ENCODE measurements at regions of chr1 and their contacts with region 1.

Region 1: DNA sequence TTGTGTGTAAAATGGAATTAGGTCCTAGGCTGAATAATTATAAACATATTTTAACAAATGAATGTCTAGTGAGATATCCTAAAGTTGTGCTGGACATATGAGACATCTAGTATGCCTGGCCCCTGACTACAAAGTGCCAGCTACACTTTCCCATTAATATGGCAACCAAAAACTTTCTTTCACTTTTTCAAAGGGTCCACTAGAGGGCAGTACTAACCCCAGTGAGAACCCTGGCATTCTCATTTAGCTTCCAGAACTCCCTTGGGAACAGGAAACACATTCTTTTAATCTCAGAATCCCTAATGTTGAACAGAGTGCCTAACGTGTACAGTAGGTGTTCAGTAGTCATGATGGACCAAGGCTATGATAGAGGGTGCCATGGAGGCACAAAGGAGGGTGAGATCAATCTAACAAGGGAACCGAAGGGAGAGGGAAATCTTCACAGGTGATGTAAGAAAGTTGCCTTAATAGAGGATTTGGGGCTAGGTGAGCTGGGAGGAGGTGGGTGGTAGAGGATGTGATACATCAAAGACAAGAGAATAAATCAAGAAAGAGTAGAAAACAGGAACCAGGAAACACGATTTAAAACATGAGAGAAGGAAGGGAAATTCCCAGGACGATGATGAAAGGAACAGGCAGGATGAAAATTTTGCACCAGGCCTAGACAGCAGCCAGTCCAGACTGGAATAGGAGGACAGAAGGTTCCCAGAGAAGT is 41.6 kb downstream of the NSL1 start:
- DNase-seq: peak in 2 of 3 donors; percentile 65 to 82
- H3K4me3 ChIP-seq: peak overlapping the region in 1 of 3 experiments; percentile 7
- H3K4me3 Mint-ChIP-seq: no peak overlapping the region
- H3K27ac ChIP-seq: peak overlapping the region in 1 of 2 donors; percentile 24
- H3K27ac Mint-ChIP-seq: peak overlapping the region; percentile 43 to 89 (median 75)
- H3K4me1 ChIP-seq: peaks cover 48 to 57% of the 10 kb centered on the region in 2 donors
- H3K4me1 Mint-ChIP-seq: peaks cover 47% of the 10 kb centered on the region
- H3K27me3 ChIP-seq: no peaks in the 10 kb centered on the region
- H3K27me3 Mint-ChIP-seq: peaks cover 0 to 2% (median 0%) of the 10 kb centered on the region in 3 donors
- CTCF ChIP-seq: peak; percentile 93

Region 2: GRCh38 chr1:212469701-212470458 is 280.1 kb before region 1 on chr1:
- intact Hi-C with region 1: no loop called
- DNase-seq: no peak
- H3K4me3 ChIP-seq: no peak overlapping the region
- H3K4me3 Mint-ChIP-seq: no peak overlapping the region
- H3K27ac ChIP-seq: no peak overlapping the region
- H3K27ac Mint-ChIP-seq: peak overlapping the region in 1 of 7 donors; percentile 66
- H3K4me1 ChIP-seq: no peaks in the 10 kb centered on the region
- H3K4me1 Mint-ChIP-seq: no peaks in the 10 kb centered on the region
- H3K27me3 ChIP-seq: no peaks in the 10 kb centered on the region
- H3K27me3 Mint-ChIP-seq: peaks cover 3 to 10% (median 5%) of the 10 kb centered on the region in 3 donors
- CTCF ChIP-seq: no peak

Region 3: GRCh38 chr1:212671342-212672031 is 78.5 kb before region 1 on chr1:
- intact Hi-C with region 1: loop called in 1 of 2 experiments (anchors 5 kb)
- DNase-seq: peak; percentile 93 to 99 (median 94)
- H3K4me3 ChIP-seq: peak overlapping the region in 1 of 3 experiments; percentile 36
- H3K4me3 Mint-ChIP-seq: peak overlapping the region; percentile 37 to 77
- H3K27ac ChIP-seq: peak overlapping the region; percentile 61 to 70
- H3K27ac Mint-ChIP-seq: peak overlapping the region; percentile 87 to 97 (median 94)
- H3K4me1 ChIP-seq: peaks cover 55 to 70% of the 10 kb centered on the region in 2 donors
- H3K4me1 Mint-ChIP-seq: peaks cover 61% of the 10 kb centered on the region
- H3K27me3 ChIP-seq: no peaks in the 10 kb centered on the region
- H3K27me3 Mint-ChIP-seq: peaks cover 0 to 4% (median 2%) of the 10 kb centered on the region in 3 donors
- CTCF ChIP-seq: no peak

Region 4: DNA sequence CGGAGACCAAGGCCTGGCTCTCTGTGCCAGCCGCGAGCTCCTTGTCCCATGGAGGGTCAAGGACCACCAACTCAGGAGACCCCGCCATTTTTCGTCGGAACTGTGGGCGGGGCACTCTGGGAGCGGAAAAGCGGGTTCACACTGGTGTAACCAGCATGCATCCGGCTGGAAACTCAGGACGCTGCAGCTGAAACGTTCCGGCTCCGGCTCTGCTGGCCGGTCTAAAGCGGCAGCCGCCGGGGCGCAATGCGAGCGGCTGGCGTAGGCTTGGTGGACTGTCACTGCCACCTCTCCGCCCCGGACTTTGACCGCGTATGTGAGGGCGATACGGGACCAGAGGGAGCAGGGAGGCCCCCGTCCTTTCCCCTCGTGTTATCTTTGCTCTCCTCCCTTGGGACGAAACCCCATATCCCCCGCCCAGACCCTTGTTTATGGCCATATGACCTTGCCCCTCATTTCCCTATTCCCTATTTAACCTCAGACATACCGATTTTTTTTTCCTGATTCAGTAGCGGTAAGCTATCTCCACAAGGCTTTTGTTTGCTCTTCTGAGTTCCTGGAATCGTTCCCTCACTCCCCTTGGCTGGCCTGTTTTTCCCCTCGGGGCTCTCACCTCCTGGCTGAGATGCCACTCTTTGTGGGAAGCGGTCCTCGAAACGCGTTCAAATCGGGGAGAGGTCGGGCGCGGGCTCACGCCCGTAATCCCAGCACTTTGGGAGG is 41.9 kb after region 1 on chr1 and contains the starts of genes NSL1 and TATDN3:
- intact Hi-C with region 1: loop called (anchors 5 kb)
- DNase-seq: peak; percentile 93 to 95 (median 95)
- H3K4me3 ChIP-seq: peak within 1 kb of the TSS; percentile 84 to 96 (median 92)
- H3K4me3 Mint-ChIP-seq: peak within 1 kb of the TSS; percentile 97 to 100
- H3K27ac ChIP-seq: peak within 1 kb of the TSS; percentile 96 to 98
- H3K27ac Mint-ChIP-seq: peak within 1 kb of the TSS; percentile 97 to 100 (median 98)
- H3K4me1 ChIP-seq: peaks cover 53% of the 10 kb centered on the region in 2 donors
- H3K4me1 Mint-ChIP-seq: peaks cover 38% of the 10 kb centered on the region
- H3K27me3 ChIP-seq: no peaks in the 10 kb centered on the region
- H3K27me3 Mint-ChIP-seq: no peaks in the 10 kb centered on the region
- CTCF ChIP-seq: no peak
- polyA plus RNA-seq, gene NSL1: 16.8 to 80.3 (median 62.3) TPM
- polyA plus RNA-seq, gene TATDN3: 12.1 to 34.3 (median 31.4) TPM

Region 5: DNA sequence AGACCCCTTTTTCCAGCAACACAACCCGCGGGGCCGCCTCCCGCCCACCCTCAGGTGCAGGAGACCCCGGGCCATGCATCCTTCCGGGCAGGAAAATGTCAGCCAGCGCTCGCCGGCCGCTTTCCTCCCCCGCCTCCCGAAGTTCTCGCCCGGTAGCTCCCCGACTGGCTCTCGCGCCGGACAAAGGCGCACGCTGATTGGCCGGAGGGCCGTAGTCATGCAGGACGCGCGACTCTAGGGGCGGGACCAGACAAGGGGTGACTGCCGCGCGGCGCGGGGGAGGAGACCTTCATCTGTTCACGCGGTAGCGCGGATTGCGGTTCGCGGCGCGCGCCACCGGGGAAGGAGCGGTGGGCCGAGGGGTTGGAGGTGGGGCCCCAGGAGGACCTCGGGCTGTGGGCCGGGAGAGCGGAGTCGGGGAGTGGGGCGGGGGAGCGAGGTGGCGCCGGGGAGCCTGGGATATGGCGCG is 108.0 kb after region 1 on chr1 and contains the start of gene FLVCR1:
- intact Hi-C with region 1: loop called in 1 of 2 experiments (anchors 5 kb)
- DNase-seq: peak; percentile 91 to 93 (median 91)
- H3K4me3 ChIP-seq: peak within 1 kb of the TSS; percentile 58 to 86 (median 85)
- H3K4me3 Mint-ChIP-seq: peak within 1 kb of the TSS; percentile 96 to 98
- H3K27ac ChIP-seq: peak within 1 kb of the TSS; percentile 75 to 93
- H3K27ac Mint-ChIP-seq: peak within 1 kb of the TSS; percentile 96 to 99 (median 98)
- H3K4me1 ChIP-seq: peaks cover 46 to 51% of the 10 kb centered on the region in 2 donors
- H3K4me1 Mint-ChIP-seq: peaks cover 15% of the 10 kb centered on the region
- H3K27me3 ChIP-seq: no peaks in the 10 kb centered on the region
- H3K27me3 Mint-ChIP-seq: peaks cover 0 to 2% (median 0%) of the 10 kb centered on the region in 3 donors
- CTCF ChIP-seq: no peak
- polyA plus RNA-seq, gene FLVCR1: 1.8 to 5.5 (median 2.8) TPM

Measured in CD14-positive monocyte (primary cell).